ENCODE measurements at regions of chr5 and their contacts with region 1.

Region 1: DNA sequence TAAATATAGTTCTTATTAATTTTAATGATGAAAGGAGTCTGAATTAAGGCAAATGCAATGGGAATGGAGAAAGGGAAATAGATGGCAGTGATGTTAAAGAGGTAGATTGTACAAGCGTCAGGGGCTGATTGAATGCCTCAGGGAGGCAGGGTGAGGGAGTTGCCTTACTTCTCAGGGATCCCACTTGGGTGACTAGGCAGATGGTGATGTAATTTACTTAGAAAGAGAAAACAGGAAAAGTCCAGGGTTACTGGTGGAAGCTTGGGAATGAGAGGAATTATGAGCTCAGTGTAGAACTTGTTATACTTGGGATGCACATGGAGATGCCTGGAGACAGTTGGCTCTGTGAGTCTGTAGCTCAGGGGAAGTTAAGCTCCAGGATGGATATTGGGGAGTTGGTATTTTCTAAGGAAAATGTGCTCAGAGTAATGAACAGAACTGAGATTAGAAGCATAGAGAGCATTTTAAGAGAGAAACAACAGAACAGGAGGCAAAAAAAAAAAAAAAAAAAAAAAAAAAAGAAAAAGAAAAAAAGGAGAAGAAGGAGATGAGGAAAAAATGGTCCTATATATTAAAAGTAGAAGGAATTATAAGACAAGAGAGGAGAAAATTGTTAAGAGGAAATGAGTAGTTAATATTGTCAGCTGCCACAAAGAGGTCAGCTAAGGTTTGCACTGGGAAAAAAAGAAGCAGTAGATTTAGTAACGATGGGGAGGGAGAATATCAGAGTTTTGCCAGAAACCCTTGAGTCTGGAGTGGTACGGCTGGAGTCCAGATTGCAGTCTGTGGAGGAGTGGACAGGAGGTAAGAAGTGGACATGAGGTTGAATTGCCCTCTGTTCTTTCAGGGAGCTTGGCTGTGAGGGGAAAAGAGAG is 88.0 kb upstream of the ELL2 start:
- DNase-seq: no peak
- H3K4me3 ChIP-seq: no peak overlapping the region
- H3K27ac ChIP-seq: peak overlapping the region; percentile 22 to 76
- H3K4me1 ChIP-seq: peaks cover 0 to 36% of the 10 kb centered on the region in 2 donors
- H3K27me3 ChIP-seq: no peaks in the 10 kb centered on the region
- CTCF ChIP-seq: no peak

Region 2: DNA sequence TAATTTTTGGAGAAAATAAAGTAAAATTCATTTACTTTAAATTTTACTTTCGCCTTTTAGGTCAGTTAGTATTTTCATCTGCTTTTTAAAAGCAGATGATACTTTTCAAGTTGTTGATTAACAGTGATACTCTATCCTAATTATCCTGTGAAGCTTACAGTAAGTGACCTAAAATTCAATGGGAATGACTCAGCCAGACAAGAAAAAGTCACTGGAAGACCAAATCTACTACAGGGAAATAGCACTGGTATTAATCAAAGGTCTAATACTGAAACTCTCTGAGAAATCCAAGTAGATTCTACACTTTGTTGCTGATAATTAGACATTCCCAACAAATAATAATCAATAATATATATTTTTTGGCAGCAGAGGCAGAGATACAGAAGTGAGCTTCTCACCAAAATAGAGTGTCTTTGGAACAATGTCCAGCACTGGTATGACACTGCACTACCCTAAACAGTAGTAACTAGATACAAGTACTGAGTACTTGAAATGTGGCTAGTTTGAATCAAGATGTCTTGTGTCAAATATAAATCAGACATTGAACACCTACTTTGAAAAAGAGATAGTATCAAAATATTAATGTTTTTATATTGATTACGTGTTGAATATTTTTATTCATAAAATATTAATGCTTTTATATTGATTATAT is 65.2 kb before region 1 on chr5:
- intact Hi-C with region 1: loop called (anchors 5 kb)
- DNase-seq: no peak
- H3K4me3 ChIP-seq: no peak overlapping the region
- H3K27ac ChIP-seq: no peak overlapping the region
- H3K4me1 ChIP-seq: peaks cover 4 to 12% of the 10 kb centered on the region in 2 donors
- H3K27me3 ChIP-seq: no peaks in the 10 kb centered on the region
- CTCF ChIP-seq: no peak

Region 3: GRCh38 chr5:96408276-96408777 is 358.7 kb after region 1 on chr5:
- intact Hi-C with region 1: no loop called
- DNase-seq: no peak
- H3K4me3 ChIP-seq: no peak overlapping the region
- H3K27ac ChIP-seq: peak overlapping the region in 1 of 2 donors; percentile 32
- H3K4me1 ChIP-seq: no peaks in the 10 kb centered on the region
- H3K27me3 ChIP-seq: no peaks in the 10 kb centered on the region
- CTCF ChIP-seq: no peak

Measured in ascending aorta (tissue), 2 donors.